ENCODE measurements at regions of chr15 and their contacts with region 1.

Region 1: DNA sequence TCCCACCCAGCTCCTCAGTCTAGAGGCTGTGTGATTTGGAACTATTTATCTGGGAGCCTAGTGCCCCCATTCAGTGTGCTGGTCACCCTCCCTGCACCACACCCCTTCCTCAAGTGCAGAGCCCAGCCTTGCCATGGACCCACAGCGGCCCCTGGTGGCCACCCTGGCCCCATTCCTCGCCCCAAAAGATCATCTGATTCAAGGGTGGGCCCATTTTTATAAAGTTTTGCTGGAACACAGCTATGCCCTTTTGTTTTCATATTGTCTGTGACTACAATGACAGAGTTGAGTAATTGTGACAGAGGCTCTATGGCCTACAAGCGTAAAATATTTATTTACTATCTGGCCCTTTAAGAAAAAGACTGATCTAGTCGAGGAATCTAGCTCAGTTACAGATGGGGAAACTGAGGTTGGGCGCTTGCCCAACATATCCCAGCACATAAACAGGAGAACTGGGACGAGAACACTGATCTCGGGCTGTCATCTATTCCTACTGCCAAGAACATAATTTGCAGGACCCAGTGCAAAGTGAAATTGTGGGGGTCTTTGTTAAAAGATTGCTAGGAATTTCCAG is 1.8 kb downstream of the FES start:
- DNase-seq: peak; percentile 72
- H3K4me3 ChIP-seq: peak overlapping the region in 1 of 3 experiments; percentile 46
- H3K27ac ChIP-seq: peak overlapping the region; percentile 4
- H3K4me1 ChIP-seq: peaks cover 24% of the 10 kb centered on the region
- H3K27me3 ChIP-seq: no peaks in the 10 kb centered on the region
- CTCF ChIP-seq: peak; percentile 96 to 98
- POLR2A ChIP-seq: no peak

Region 2: GRCh38 chr15:90482124-90483011 is 403.8 kb before region 1 on chr15:
- CTCF ChIA-PET with region 1: interaction called, 12 read pairs
- POLR2A ChIA-PET with region 1: no interaction called
- dilution Hi-C with region 1: no loop called
- intact Hi-C with region 1: no loop called
- DNase-seq: peak; percentile 78
- H3K4me3 ChIP-seq: no peak overlapping the region
- H3K27ac ChIP-seq: no peak overlapping the region
- H3K4me1 ChIP-seq: peaks cover 11% of the 10 kb centered on the region
- H3K27me3 ChIP-seq: no peaks in the 10 kb centered on the region
- CTCF ChIP-seq: peak; percentile 47 to 67
- POLR2A ChIP-seq: no peak

Region 3: DNA sequence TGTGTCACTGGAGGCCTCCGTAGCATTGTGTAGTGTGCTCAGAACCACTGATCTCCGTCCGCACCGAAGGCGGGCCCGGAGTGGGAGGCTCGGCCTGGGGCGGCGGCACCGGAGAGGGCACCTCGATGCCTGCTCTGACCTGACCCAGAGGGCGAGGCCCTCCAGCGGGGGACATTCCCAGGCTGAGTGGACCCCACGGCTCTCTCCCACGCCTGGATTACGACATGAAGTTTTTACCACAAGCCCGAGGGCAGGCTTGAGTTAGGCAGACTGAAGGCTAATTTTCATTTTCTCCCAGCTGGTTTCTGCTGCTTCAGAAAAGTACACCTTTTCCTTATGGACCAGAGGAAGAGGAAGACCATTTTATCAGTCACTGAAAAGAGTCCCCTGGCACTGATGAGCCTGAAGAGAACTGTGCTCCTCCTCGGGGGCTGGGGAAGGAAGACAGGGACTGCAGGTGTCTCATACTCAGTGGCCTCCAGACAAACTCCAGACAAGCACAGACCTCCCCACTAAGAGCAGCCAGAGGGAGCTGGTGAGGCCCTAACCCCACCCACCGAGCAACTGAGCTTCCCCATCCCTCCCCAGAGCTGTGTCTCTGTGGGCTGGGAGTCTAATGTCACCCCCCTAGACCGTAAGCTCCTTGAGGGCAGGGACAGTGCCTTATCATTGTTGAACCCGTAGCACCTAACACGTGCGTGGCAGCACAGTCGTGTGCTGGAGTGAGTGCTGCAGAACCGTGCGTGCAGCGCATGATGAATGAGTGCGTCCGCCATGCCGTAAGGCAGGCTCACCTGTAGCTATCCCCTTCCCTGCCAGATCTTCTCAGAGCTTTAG is 243.4 kb before region 1 on chr15:
- CTCF ChIA-PET with region 1: interaction called, 237 read pairs
- POLR2A ChIA-PET with region 1: no interaction called
- dilution Hi-C with region 1: no loop called
- intact Hi-C with region 1: no loop called
- DNase-seq: no peak
- H3K4me3 ChIP-seq: no peak overlapping the region
- H3K27ac ChIP-seq: no peak overlapping the region
- H3K4me1 ChIP-seq: no peaks in the 10 kb centered on the region
- H3K27me3 ChIP-seq: no peaks in the 10 kb centered on the region
- CTCF ChIP-seq: peak in 1 of 2 donors; percentile 6
- POLR2A ChIP-seq: no peak

Region 4: DNA sequence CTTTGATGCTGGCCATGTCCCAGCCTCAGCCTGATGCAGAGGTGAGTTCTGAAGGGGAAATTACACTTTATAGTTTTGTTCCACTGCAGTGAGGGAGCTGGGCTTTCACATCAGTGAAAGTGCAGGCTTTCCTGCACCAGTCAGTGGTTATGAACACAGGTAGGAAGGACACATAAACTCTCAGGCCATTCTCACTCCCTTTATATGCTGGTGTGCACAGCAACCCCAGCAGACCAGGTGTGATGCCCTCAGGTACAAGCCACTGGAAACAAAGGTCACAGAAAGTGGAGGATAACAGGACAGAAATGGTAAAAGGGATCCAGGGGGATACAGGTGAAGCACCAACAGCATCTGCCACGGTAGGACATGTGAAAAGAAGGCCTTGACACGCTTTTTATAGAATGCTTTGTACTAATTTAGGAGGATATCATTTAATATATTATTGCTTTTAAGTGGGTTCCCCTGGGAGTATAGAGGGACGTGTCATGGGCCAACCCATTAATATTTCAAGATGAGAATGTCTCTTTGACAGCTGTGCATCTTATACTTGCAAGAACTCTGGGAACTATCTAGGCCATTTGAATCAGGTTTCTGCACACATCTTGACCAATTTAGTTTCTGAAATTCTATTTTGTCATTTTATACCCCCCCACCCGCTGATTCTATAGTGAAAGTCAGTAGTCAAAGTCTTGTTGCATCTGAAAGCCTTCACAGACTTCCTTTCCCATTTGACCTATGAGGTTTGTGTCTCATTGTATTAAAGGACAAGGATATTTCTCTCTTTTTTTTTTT is 193.9 kb before region 1 on chr15:
- CTCF ChIA-PET with region 1: interaction called, 14 read pairs
- POLR2A ChIA-PET with region 1: no interaction called
- dilution Hi-C with region 1: no loop called
- intact Hi-C with region 1: loop called (anchors 1 kb)
- DNase-seq: no peak
- H3K4me3 ChIP-seq: no peak overlapping the region
- H3K27ac ChIP-seq: no peak overlapping the region
- H3K4me1 ChIP-seq: peaks cover 2% of the 10 kb centered on the region
- H3K27me3 ChIP-seq: no peaks in the 10 kb centered on the region
- CTCF ChIP-seq: no peak
- POLR2A ChIP-seq: no peak

Region 5: DNA sequence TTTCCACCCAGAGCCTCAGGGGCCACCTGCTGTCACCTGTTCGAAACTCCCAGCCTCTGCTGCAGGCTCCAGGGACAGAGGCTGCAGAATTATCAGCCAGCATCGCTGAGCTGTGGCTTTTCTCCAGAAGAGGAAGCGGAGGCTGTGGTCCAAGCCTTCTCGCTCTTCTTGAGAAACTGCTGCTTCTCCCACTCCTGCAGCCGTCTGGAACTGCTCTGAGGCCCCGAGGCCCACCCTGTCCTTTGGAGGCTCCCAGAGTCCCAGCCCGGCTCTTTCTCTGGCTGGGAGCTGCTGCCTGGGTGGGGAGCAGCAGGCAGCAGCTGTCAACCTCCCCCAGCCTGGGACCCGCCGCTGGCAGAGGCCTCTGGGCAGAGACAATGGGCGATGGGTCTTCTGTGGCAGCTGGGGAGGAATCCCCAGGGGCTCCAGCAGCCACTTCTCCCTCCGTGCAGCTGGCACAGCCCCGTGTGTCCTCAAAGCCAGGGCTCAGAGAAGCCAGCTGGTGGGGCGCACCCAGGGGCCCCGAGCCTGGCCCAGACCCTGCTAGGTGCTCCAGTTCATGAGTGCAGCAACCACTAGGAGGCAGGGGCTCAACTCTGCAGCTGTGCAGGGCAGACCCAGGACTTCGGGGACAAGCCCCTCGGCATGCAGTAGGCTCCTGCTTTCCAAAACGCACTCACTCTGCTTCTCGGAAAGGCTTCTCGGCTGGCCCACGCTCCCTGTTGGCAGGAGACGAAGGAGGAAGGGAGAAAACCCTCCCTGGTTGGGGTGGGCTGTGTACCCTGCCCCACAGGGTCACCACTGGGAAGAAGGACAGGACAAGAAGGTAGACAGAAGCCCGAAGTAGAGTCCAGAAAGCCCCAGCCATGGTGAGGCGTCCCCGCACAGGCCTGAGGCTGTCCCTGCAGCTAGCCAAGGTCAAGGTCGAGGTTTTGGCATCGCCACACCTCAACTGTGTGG is 67.6 kb before region 1 on chr15:
- CTCF ChIA-PET with region 1: no interaction called
- POLR2A ChIA-PET with region 1: no interaction called
- dilution Hi-C with region 1: no loop called
- intact Hi-C with region 1: loop called (anchors 2 kb)
- DNase-seq: no peak
- H3K4me3 ChIP-seq: no peak overlapping the region
- H3K27ac ChIP-seq: no peak overlapping the region
- H3K4me1 ChIP-seq: no peaks in the 10 kb centered on the region
- H3K27me3 ChIP-seq: no peaks in the 10 kb centered on the region
- CTCF ChIP-seq: peak in 1 of 2 donors; percentile 3
- POLR2A ChIP-seq: no peak

Region 6: GRCh38 chr15:90931737-90932659 is 45.9 kb after region 1 on chr15 and contains the start of gene HDDC3:
- CTCF ChIA-PET with region 1: interaction called, 23 read pairs
- POLR2A ChIA-PET with region 1: no interaction called
- dilution Hi-C with region 1: no loop called
- intact Hi-C with region 1: loop called (anchors 1 kb)
- DNase-seq: peak; percentile 79
- H3K4me3 ChIP-seq: peak within 1 kb of the TSS; percentile 33 to 80 (median 62)
- H3K27ac ChIP-seq: no peak within 1 kb of the TSS
- H3K4me1 ChIP-seq: peaks cover 36% of the 10 kb centered on the region
- H3K27me3 ChIP-seq: no peaks in the 10 kb centered on the region
- CTCF ChIP-seq: peak; percentile 98
- POLR2A ChIP-seq: peak; percentile 74
- total RNA-seq, gene HDDC3: 12.3 and 16.0 TPM in 2 replicates

Region 7: DNA sequence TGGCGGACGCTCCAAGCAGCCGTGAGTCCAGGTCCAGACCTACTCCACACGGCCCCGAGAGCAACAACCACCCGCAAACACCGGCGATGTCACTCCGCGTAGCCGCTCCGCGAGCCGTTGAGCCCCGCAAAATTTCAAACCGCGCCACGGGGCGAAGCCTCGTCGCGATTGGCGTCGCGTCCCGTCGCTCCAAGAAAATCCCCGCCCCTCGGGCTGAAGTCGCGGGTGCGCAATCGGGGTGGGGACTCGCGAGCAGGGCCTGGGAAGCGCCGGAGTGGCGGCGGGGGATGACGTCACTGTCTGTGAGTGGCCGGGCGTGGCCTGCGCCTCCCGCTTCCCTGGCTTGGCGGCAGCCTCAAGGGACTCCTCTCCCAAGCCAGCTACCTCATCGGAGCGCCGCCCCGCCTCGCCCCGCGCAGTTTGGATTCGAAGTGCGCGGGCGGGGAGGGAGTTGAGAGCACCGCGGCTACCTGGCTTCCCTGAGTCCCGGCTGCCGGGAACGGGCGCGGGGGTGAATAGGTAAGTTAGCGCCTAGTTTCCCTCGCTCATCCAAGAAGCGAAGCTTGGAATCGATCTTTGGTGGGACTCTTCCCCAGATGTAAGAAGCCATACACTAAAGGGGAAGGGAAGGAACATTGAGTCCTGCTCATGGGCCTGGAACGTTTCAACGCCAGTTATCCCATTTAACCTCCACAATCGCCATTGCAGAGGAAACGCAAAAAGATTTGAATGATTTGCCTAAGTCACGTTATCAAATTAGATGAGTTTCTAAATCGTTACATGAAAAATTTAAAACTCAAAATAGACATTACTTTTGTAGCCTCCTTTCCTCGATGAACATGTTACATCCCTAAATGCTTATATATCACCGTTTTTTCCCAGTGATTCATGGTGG is 108.5 kb after region 1 on chr15 and contains the start of gene PRC1:
- CTCF ChIA-PET with region 1: no interaction called
- POLR2A ChIA-PET with region 1: no interaction called
- dilution Hi-C with region 1: no loop called
- intact Hi-C with region 1: no loop called
- DNase-seq: peak; percentile 99
- H3K4me3 ChIP-seq: peak within 1 kb of the TSS; percentile 71 to 98 (median 93)
- H3K27ac ChIP-seq: peak within 1 kb of the TSS; percentile 94
- H3K4me1 ChIP-seq: peaks cover 20% of the 10 kb centered on the region
- H3K27me3 ChIP-seq: no peaks in the 10 kb centered on the region
- CTCF ChIP-seq: no peak
- POLR2A ChIP-seq: peak; percentile 42
- total RNA-seq, gene PRC1: 171 and 185 TPM in 2 replicates